Calu3 (cell line): ENCODE measurements at regions of chr1 and their contacts with region 1.

Region 1: GRCh38 chr1:59296358-59297256 is at the start of gene FGGY:
- DNase-seq: peak; percentile 95
- H3K4me3 Mint-ChIP-seq: peak within 1 kb of the TSS; percentile 76
- H3K27ac Mint-ChIP-seq: peak within 1 kb of the TSS; percentile 71
- H3K4me1 Mint-ChIP-seq: peaks cover 30% of the 10 kb centered on the region
- H3K27me3 Mint-ChIP-seq: no peaks in the 10 kb centered on the region
- CTCF ChIP-seq: no peak
- total RNA-seq, gene FGGY: 8.5 and 11.1 TPM in 2 replicates

Region 2: DNA sequence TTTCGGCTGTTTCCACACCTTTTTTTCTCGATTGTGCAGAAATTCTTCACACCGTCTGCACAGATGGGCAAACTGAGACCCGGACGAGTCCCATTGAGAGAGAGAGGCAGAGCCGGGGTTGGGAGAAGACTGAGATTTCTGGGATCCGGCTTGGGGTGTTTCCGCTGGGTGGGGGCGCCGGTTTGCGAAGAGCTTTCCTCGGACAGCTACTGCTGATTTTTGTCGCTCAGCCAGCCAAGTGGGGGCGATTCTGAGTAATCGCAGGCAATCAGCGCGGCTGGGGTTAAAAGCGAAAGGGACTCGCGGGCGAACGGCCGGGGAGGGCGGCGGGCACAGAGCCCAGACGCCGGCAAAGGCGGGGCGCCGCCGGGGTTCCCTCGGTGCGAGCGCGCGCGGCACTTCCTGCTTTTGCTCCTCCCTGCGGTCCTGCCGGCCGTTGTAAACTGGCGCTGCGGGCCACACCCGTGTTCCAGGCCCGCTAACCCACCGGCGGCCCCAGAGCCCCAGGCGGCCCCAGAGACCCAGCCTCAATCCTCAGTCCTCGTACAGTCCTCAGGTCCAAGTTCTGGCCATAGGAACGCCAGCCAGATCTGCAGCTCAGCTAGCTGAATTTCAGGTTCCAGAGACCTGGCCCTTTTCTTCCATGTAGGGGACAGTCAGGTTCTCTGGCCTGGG is 480.4 kb before region 1 on chr1:
- CTCF ChIA-PET with region 1: no interaction called
- intact Hi-C with region 1: loop called (anchors 10 kb)
- DNase-seq: peak; percentile 93
- H3K4me3 Mint-ChIP-seq: peak overlapping the region; percentile 85
- H3K27ac Mint-ChIP-seq: peak overlapping the region; percentile 98
- H3K4me1 Mint-ChIP-seq: peaks cover 52% of the 10 kb centered on the region
- H3K27me3 Mint-ChIP-seq: no peaks in the 10 kb centered on the region
- CTCF ChIP-seq: no peak

Region 3: GRCh38 chr1:59146651-59147358 is 149.8 kb before region 1 on chr1:
- CTCF ChIA-PET with region 1: interaction called, 6 read pairs
- intact Hi-C with region 1: loop called (anchors 10 kb)
- DNase-seq: peak; percentile 67
- H3K4me3 Mint-ChIP-seq: peak overlapping the region; percentile 63
- H3K27ac Mint-ChIP-seq: peak overlapping the region; percentile 49
- H3K4me1 Mint-ChIP-seq: peaks cover 47% of the 10 kb centered on the region
- H3K27me3 Mint-ChIP-seq: no peaks in the 10 kb centered on the region
- CTCF ChIP-seq: no peak

Region 4: DNA sequence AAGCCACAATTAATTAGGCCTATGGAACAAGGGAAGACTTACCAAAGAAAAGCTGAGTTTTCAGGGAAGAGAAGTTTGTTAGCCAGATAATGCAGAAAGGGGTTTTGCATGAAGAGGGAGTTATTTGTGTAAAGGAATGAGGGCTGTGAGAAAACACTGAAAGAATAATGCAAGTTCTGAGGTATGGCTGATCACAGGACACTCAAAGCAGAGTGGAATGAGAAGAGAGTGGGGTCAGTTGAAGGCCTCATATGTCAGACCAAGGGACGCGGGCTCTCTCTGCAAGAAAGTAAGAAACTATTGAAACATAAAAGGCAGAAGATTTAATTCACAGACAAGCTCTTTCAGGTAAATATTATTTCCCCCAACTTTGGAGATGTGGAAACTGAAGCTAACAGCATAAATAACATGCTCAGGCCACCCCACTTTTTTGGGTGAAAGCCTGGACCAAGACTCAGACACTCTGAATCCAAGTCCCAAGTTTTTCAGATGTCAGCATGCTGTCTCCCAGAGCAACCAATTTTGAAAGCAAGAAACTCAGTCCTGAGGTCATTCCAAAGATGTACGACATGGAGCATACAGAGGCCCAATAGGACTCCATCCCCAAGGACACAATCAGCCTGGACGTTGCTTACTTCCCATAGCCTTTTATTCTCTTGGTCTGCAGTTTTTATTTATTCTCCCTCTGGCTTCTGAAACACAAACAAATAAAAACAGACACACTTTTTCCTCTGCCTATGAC is 47.0 kb before region 1 on chr1:
- CTCF ChIA-PET with region 1: no interaction called
- intact Hi-C with region 1: no loop called
- DNase-seq: no peak
- H3K4me3 Mint-ChIP-seq: no peak overlapping the region
- H3K27ac Mint-ChIP-seq: no peak overlapping the region
- H3K4me1 Mint-ChIP-seq: no peaks in the 10 kb centered on the region
- H3K27me3 Mint-ChIP-seq: no peaks in the 10 kb centered on the region
- CTCF ChIP-seq: no peak

Region 5: DNA sequence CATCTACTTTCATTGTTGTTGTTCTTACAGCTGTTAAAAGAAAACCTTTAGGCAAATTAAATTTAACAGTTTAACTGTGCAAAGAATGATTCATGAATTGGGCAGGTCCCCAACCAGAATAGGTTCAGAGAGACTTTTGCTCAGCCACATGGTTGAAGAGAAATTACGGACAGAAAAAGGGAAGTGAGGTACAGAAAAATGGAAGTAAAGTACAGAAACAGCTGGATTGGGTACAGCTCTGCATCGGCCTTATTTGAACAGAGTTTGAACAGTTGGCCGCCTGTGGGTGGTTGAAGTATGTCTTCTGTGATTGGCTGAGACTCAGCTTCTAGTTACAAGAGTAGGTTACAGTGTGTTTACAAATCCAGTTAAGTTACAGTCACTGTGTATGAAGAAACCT is 210.3 kb after region 1 on chr1:
- CTCF ChIA-PET with region 1: no interaction called
- intact Hi-C with region 1: loop called (anchors 10 kb)
- DNase-seq: no peak
- H3K4me3 Mint-ChIP-seq: no peak overlapping the region
- H3K27ac Mint-ChIP-seq: no peak overlapping the region
- H3K4me1 Mint-ChIP-seq: peaks cover 15% of the 10 kb centered on the region
- H3K27me3 Mint-ChIP-seq: no peaks in the 10 kb centered on the region
- CTCF ChIP-seq: no peak

Region 6: DNA sequence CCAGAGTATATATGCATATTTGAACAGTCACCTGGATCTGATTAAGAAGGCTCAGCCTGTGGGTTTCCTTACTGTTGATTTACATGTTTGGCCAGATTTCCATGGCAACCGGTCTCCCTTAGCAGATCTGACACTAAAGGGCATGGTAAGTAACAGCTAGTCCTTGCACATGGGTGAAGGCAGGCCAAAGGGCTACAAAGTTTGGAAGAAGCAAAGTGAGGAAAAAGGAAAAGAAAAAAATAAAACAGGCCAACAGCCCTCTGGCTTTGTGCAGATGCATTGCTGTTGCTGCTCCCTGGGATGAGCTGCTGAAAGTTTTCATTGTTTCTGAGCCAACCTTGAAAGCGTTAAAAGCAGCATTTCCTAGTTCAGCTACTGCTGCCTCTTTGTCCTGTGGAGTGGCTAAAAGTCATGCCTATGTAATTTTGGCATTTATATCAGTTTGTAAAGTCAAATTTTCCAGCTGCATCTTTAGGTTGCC is 341.7 kb after region 1 on chr1:
- CTCF ChIA-PET with region 1: no interaction called
- intact Hi-C with region 1: loop called (anchors 5 kb)
- DNase-seq: peak; percentile 36
- H3K4me3 Mint-ChIP-seq: no peak overlapping the region
- H3K27ac Mint-ChIP-seq: peak overlapping the region; percentile 10
- H3K4me1 Mint-ChIP-seq: peaks cover 27% of the 10 kb centered on the region
- H3K27me3 Mint-ChIP-seq: no peaks in the 10 kb centered on the region
- CTCF ChIP-seq: no peak

Region 7: GRCh38 chr1:59699227-59699847 is 402.7 kb after region 1 on chr1:
- CTCF ChIA-PET with region 1: interaction called, 3 read pairs
- intact Hi-C with region 1: loop called (anchors 1 kb)
- DNase-seq: peak; percentile 31
- H3K4me3 Mint-ChIP-seq: no peak overlapping the region
- H3K27ac Mint-ChIP-seq: no peak overlapping the region
- H3K4me1 Mint-ChIP-seq: peaks cover 22% of the 10 kb centered on the region
- H3K27me3 Mint-ChIP-seq: no peaks in the 10 kb centered on the region
- CTCF ChIP-seq: peak; percentile 90